ENCODE measurements at regions of chr1 and their contacts with region 1.

Region 1: DNA sequence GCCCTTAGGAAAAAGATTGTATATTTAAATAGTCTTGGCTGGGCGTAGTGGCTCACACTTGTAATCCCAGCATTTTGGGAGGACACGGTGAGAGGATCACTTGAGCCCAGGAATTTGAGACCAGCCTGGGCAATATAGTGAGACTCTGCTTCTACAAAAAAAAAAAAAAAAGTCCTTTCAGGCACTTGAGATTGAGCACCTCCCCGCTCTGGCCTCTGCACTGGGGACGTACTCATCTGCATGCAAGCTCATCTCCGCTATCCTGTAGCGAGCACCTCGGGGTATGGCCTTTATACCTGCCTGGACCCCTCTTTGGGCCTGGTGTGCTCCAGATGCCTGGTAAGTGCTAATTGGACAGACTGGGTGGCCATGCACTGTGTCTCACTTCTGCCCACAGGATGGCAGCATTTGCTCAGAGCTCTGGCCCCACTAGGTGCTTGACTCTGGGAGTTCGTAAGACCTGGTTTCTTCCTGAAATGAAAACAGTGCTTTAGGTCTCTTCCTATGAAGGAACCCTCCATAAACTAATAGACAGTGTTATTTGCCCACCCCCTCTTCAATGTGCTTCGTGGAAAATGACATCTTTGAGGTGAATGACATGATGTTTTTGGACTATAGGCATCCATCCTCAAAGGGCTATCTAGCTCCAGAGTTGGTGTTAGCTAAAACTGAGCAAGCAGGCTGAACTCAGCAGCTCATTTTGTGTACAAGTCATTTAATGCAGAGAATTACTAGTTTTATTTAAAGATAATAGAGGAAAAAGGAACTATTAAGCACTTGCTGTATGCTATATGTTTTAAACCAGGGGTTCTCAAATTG is 61.7 kb upstream of the ADAR start:
- DNase-seq: peak; percentile 60 to 77 (median 68)
- ATAC-seq: peak; percentile 100
- H3K4me3 ChIP-seq: no peak overlapping the region
- H3K27ac ChIP-seq: no peak overlapping the region
- H3K4me1 ChIP-seq: no peaks in the 10 kb centered on the region; a peak in 1 of 5 replicates
- H3K27me3 ChIP-seq: peaks cover 0 to 7% of the 10 kb centered on the region in 2 experiments; a peak in 1 of 5 replicates
- CTCF ChIP-seq: peak; percentile 84 to 89 (median 87)
- EP300 ChIP-seq: no peak
- POLR2A ChIP-seq: no peak
- RAD21 ChIP-seq: peak; percentile 91 to 94

Region 2: DNA sequence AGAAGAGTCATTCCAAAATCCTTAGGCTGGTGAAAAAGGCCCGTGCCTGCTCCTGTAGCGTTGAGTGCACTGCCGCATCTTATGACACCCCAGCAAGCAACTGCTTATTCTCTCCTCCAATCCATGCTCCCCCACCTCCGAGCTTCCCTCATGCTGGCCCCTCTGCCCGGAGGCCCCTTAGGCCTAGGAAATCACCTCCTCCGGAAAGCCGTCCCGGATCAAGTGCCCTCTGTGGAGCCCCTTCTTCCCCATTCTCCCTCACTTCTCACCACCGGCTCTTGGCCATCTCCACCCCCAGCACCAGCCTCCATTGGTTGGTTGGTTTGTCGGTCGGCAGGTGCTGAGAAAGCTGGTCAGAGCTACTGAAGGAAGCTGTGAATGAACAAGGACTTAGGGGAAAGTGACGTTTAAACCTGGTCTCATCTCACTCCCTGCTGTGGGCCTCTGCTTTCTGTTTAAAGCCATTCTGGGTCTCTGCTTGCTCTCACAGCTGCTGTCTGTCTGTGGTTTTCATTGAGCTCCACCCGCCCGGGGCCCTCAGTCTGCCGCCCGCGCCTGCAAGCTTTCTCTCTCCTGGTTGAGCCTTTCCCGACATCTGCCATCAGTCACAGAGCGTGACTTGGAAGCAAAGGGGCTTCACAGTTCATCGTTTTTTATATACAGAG is 78.2 kb after region 1 on chr1:
- CTCF ChIA-PET with region 1: no interaction called
- POLR2A ChIA-PET with region 1: interaction called, 4 read pairs
- in situ Hi-C with region 1: no loop called
- intact Hi-C with region 1: loop called (anchors 5 kb)
- DNase-seq: no peak
- ATAC-seq: no peak
- H3K4me3 ChIP-seq: no peak overlapping the region
- H3K27ac ChIP-seq: no peak overlapping the region
- H3K4me1 ChIP-seq: no peaks in the 10 kb centered on the region
- H3K27me3 ChIP-seq: peaks cover 57 to 93% of the 10 kb centered on the region in 2 experiments
- CTCF ChIP-seq: no peak
- EP300 ChIP-seq: no peak
- POLR2A ChIP-seq: no peak
- RAD21 ChIP-seq: no peak

Region 3: DNA sequence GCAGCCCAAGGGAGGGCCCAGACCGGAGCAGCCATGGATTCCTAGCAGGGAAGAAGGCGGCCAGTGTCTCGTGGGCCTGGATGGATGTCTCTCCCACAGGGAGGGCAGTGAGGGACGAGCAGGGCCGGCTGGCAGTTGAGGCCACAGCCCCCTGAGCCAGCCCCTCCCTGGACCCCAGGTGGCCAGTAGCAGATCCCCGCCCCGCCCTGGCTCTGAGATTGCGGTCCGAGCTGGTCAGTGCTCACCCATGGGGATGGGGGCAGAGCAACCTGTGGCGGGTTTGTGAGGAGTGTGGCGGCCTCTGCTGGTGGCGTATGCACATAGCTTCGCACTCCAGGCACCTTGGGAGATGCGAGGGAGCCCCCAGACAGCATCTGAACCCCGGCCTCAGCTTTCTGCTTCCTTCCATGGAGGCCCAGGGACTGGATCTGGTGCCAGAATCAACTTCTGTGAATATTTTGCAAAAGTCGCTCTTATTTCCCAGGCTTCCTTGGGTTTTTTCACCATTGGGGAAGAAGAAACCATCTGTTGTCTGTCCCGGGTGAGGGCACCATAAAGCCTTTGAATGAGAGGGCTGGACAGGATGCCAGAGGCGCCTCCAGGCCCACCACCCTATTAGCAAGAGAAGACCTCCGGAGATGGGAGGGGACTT is 208.8 kb after region 1 on chr1:
- CTCF ChIA-PET with region 1: interaction called, 27 read pairs
- POLR2A ChIA-PET with region 1: no interaction called
- in situ Hi-C with region 1: no loop called
- intact Hi-C with region 1: loop called (anchors 2 kb)
- DNase-seq: peak; percentile 80 to 85 (median 81)
- ATAC-seq: peak; percentile 99
- H3K4me3 ChIP-seq: no peak overlapping the region
- H3K27ac ChIP-seq: no peak overlapping the region
- H3K4me1 ChIP-seq: peaks cover under 1 to 8% of the 10 kb centered on the region in 2 experiments; a peak in 4 of 5 replicates
- H3K27me3 ChIP-seq: peaks cover 0 to 30% of the 10 kb centered on the region in 2 experiments; a peak in 2 of 5 replicates
- CTCF ChIP-seq: peak; percentile 91 to 94 (median 94)
- EP300 ChIP-seq: no peak
- POLR2A ChIP-seq: no peak
- RAD21 ChIP-seq: peak; percentile 92 to 97

Region 4: GRCh38 chr1:155063550-155064110 is 394.0 kb after region 1 on chr1 and contains the start of gene EFNA4:
- CTCF ChIA-PET with region 1: interaction called, 4 read pairs
- POLR2A ChIA-PET with region 1: interaction called, 3 read pairs
- in situ Hi-C with region 1: no loop called
- intact Hi-C with region 1: loop called (anchors 5 kb)
- DNase-seq: peak; percentile 91 to 93 (median 92)
- ATAC-seq: peak; percentile 91
- H3K4me3 ChIP-seq: peak within 1 kb of the TSS; percentile 58
- H3K27ac ChIP-seq: peak within 1 kb of the TSS; percentile 45; the same call in 2 of the 3 replicates
- H3K4me1 ChIP-seq: peaks cover 27 to 58% of the 10 kb centered on the region in 2 experiments
- H3K27me3 ChIP-seq: no peaks in the 10 kb centered on the region
- CTCF ChIP-seq: no peak
- EP300 ChIP-seq: no peak
- POLR2A ChIP-seq: peak; percentile 71
- RAD21 ChIP-seq: no peak
- polyA plus RNA-seq, gene EFNA4: 0.68 to 0.89 TPM

Measured in K562 (cell line).